OCI-LY7 (cell line): ENCODE measurements at regions of chr2 and their contacts with region 1.

Region 1: GRCh38 chr2:231706731-231707624 is 1.3 kb upstream of the PTMA start:
- DNase-seq: peak; percentile 99
- H3K4me3 ChIP-seq: peak overlapping the region; percentile 93
- H3K27ac ChIP-seq: peak overlapping the region; percentile 95
- H3K4me1 ChIP-seq: peaks cover 29% of the 10 kb centered on the region
- CTCF ChIP-seq: peak; percentile 95

Region 2: DNA sequence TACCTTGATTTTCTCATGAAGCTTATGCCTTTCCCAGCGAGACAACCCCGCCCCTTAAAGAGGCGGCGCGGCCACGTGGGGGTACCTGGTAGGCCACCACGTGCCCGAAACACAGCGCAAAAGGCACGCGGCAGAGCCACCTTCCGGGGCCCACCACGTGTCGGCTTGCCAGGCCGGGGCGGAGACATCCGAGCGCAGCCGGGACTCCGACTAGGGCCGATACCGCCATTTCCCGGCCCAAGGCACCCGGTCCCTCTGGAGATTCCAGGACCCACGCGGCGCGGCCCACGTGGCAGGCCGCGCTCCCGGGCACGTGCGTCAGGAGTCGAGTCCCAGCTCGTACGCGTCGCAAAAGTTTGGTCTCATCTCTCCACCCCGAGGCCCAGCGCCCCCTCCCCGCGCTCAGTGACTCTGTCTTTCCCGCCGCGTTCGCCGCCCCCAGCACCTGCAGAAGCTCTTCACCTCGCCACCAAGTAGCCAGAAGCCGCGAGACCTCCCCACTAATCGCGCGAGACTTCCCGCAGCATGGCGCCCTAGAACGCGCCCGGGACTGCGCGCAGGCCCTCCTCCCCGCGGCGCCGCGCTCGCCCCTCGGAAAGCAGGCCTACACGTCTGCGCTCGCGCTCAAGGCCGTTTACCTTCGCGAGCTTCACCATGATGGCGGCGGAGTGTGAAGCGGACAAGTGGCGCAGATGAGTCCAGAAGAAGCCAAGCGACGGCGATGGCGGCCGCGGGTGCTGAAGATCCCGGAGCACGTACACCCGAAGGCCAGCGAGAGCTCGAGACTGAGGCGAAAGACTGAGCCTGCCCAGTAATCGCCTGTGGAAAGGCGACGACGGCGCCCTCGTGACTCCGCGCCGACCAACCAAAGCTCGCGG is 243.0 kb before region 1 on chr2 and contains the start of gene NCL:
- CTCF ChIA-PET with region 1: no interaction called
- POLR2A ChIA-PET with region 1: no interaction called
- intact Hi-C with region 1: loop called (anchors 10 kb)
- DNase-seq: peak; percentile 92
- H3K4me3 ChIP-seq: peak within 1 kb of the TSS; percentile 94
- H3K27ac ChIP-seq: peak within 1 kb of the TSS; percentile 88
- H3K4me1 ChIP-seq: peaks cover 28% of the 10 kb centered on the region
- CTCF ChIP-seq: no peak
- total RNA-seq, gene NCL: 255 and 413 TPM in 2 replicates

Region 3: DNA sequence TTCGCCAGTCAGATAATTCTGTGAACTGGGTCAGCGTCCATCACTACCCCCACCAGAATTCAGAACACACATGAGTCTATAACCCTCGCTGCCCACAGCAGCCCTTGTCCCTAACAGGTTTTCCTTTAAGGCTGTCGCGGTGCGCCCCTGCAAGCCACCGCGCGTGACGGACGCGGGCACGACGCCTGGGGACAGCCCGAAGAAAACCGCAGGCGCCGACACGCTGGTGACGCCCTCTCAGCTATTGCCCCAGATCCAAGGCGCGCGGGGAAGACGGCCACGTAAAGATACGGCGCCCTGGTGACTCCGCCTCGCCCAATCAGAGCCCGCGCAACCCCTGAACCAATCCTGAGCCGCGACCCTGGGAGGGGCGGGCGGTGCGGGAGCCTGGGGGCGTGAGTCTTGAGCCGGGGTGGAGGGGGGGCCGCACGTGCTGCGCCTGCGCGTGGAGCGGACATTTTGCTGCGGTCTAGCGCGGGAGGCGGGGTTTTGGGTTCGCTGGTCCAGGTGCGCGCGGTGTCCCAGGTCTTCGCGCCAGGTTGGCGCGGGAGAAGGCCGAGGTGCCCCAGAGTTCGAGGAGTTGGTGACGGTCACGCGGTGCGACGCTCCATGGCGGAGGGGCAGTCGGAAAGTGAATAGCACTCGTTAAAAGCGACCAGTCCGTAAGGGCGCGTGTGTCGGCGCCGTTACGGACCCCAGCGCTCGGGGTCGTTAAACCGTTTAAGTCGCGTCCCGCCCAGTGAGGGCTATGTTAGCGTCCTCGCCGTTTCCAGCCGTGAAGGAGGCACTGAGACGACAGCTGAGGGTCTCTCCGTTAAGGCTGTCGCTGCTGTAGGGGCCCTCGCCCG is 192.7 kb before region 1 on chr2:
- CTCF ChIA-PET with region 1: no interaction called
- POLR2A ChIA-PET with region 1: no interaction called
- intact Hi-C with region 1: loop called (anchors 10 kb)
- DNase-seq: peak; percentile 97
- H3K4me3 ChIP-seq: peak overlapping the region; percentile 76
- H3K27ac ChIP-seq: peak overlapping the region; percentile 49
- H3K4me1 ChIP-seq: peaks cover 23% of the 10 kb centered on the region
- CTCF ChIP-seq: no peak

Region 4: GRCh38 chr2:231662028-231662810 is 44.8 kb before region 1 on chr2:
- CTCF ChIA-PET with region 1: no interaction called
- POLR2A ChIA-PET with region 1: interaction called, 4 read pairs
- intact Hi-C with region 1: loop called (anchors 1 kb)
- DNase-seq: peak; percentile 99
- H3K4me3 ChIP-seq: peak overlapping the region; percentile 63
- H3K27ac ChIP-seq: peak overlapping the region; percentile 73
- H3K4me1 ChIP-seq: peaks cover 63% of the 10 kb centered on the region
- CTCF ChIP-seq: no peak

Region 5: GRCh38 chr2:231687133-231687852 is 19.7 kb before region 1 on chr2:
- CTCF ChIA-PET with region 1: interaction called, 5 read pairs
- POLR2A ChIA-PET with region 1: interaction called, 7 read pairs
- intact Hi-C with region 1: loop called (anchors 1 kb)
- DNase-seq: peak; percentile 92
- H3K4me3 ChIP-seq: peak overlapping the region; percentile 68
- H3K27ac ChIP-seq: peak overlapping the region; percentile 71
- H3K4me1 ChIP-seq: peaks cover 79% of the 10 kb centered on the region
- CTCF ChIP-seq: peak; percentile 86

Region 6: DNA sequence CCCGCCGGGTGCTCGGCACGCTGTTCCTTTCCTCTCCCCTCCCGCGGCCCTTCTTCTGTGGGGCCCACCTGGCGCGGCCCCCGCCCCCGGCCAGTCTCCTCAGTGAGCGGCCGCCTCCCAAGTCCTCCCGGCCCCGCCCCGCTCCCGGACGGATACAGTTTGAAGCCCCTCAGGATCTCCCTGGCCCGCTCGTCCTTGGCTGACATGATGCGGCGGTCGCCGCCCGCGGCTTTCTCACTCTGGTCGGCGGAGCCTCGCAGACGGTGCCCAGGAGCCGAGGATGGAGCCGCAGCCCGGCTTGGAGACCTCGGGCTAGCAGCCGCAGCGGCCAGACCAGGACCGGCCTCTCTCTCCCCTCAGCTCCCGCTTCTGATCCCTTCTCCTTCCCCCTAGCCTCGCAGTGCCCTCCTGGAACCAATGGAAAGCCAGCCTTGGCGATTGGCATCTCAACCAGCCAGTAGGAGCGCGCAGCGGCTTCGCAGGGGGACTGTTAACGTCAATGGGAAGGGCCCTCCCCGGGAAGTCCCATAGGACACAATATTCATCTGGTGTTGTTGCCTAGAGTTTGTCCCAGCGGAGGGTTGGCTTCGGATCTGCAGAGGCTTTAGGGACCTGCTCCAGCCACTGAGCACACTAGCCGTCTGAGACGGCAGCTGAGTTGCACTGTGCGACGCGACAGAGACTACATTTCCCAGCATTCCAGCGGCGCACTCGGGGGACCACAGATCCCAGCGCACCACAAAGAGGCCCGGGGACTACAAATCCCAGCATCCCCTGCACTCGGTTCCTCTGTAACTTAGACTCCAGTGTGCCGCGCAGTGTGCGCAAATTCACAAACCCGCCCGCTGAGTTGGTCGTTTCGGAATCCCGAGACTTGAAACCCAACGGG is 74.2 kb after region 1 on chr2 and contains the start of gene PDE6D:
- CTCF ChIA-PET with region 1: interaction called, 3 read pairs
- POLR2A ChIA-PET with region 1: no interaction called
- intact Hi-C with region 1: loop called (anchors 2 kb)
- DNase-seq: peak; percentile 97
- H3K4me3 ChIP-seq: peak within 1 kb of the TSS; percentile 75
- H3K27ac ChIP-seq: peak within 1 kb of the TSS; percentile 39
- H3K4me1 ChIP-seq: peaks cover 40% of the 10 kb centered on the region
- CTCF ChIP-seq: no peak
- total RNA-seq, gene PDE6D: 47.4 and 50.3 TPM in 2 replicates